ENCODE measurements at regions of chr11 and their contacts with region 1.

Region 1: GRCh38 chr11:113314389-113315301 is at the start of gene TTC12:
- DNase-seq: peak; percentile 85 to 91 (median 91)
- H3K4me3 ChIP-seq: peak within 1 kb of the TSS; percentile 73 to 88 (median 73)
- H3K4me3 Mint-ChIP-seq: peak within 1 kb of the TSS; percentile 89 to 90
- H3K27ac ChIP-seq: peak within 1 kb of the TSS; percentile 36 to 81
- H3K27ac Mint-ChIP-seq: peak within 1 kb of the TSS; percentile 80 to 96 (median 94)
- H3K4me1 ChIP-seq: peaks cover 11 to 13% of the 10 kb centered on the region in 2 donors
- H3K4me1 Mint-ChIP-seq: peaks cover 11% of the 10 kb centered on the region
- H3K27me3 ChIP-seq: no peaks in the 10 kb centered on the region
- H3K27me3 Mint-ChIP-seq: peaks cover 0 to 3% (median 0%) of the 10 kb centered on the region in 3 donors
- CTCF ChIP-seq: no peak
- polyA plus RNA-seq, gene TTC12: 1.7 to 3.0 (median 2.4) TPM

Region 2: GRCh38 chr11:111766093-111766833 is 1548.4 kb before region 1 on chr11 and contains the start of gene PPP2R1B:
- intact Hi-C with region 1: loop called in 1 of 2 experiments (anchors 10 kb)
- DNase-seq: peak; percentile 33 to 62 (median 53)
- H3K4me3 ChIP-seq: peak within 1 kb of the TSS; percentile 83 to 93 (median 85)
- H3K4me3 Mint-ChIP-seq: peak within 1 kb of the TSS; percentile 100
- H3K27ac ChIP-seq: peak within 1 kb of the TSS; percentile 11 to 65
- H3K27ac Mint-ChIP-seq: peak within 1 kb of the TSS; percentile 80 to 99 (median 94)
- H3K4me1 ChIP-seq: peaks cover 14 to 23% of the 10 kb centered on the region in 2 donors
- H3K4me1 Mint-ChIP-seq: peaks cover 21% of the 10 kb centered on the region
- H3K27me3 ChIP-seq: no peaks in the 10 kb centered on the region
- H3K27me3 Mint-ChIP-seq: peaks cover 0 to 7% (median 6%) of the 10 kb centered on the region in 3 donors
- CTCF ChIP-seq: no peak
- polyA plus RNA-seq, gene PPP2R1B: 5.4 to 16.9 (median 11.2) TPM

Region 3: GRCh38 chr11:111926505-111927391 is 1387.9 kb before region 1 on chr11:
- intact Hi-C with region 1: loop called in 1 of 2 experiments (anchors 10 kb)
- DNase-seq: peak; percentile 91 to 95 (median 94)
- H3K4me3 ChIP-seq: peak overlapping the region; percentile 61 to 77 (median 73)
- H3K4me3 Mint-ChIP-seq: peak overlapping the region; percentile 85 to 92
- H3K27ac ChIP-seq: peak overlapping the region; percentile 70 to 81
- H3K27ac Mint-ChIP-seq: peak overlapping the region; percentile 87 to 95 (median 93)
- H3K4me1 ChIP-seq: peaks cover 24 to 34% of the 10 kb centered on the region in 2 donors
- H3K4me1 Mint-ChIP-seq: peaks cover 28% of the 10 kb centered on the region
- H3K27me3 ChIP-seq: no peaks in the 10 kb centered on the region
- H3K27me3 Mint-ChIP-seq: peaks cover 0 to 2% (median 1%) of the 10 kb centered on the region in 3 donors
- CTCF ChIP-seq: no peak

Region 4: DNA sequence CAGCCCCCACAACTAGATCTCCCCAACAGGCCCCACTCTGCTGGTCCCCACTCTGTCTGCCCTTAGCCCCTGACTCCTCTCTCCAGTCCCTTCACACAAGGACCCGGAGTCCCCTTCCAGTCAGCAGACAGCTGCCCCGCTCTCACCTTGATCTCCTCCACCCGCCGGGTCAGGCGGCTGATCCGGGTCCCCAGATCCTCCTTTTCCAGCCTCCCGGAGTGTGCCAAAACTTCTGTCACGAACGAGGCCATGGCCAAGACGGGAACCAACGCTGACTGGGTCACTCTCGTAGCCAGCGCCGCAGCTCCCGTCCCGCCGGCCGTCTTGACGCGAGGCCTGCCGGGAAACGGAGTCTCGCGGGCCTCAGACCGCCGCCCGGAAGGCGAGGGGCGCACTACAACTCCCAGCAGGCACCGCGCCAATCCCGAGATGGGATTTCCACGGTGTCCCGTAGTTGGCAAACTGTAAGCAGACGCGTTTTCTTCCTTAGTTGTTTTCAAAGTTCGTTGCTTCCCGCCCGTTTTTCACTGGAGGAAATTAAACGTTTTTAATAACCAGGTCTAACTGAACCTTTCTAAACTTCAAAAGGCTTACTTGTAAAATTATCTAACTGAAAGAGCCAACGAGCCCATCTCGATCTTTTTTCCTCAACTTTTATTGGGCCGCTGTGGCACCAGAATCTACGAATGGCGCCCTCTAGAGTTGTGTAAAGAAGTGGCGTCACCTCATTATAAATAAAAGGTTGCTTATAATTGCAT is 458.9 kb after region 1 on chr11 and contains the start of gene ZW10:
- intact Hi-C with region 1: loop called (anchors 5 to 10 kb)
- DNase-seq: peak; percentile 92 to 95 (median 93)
- H3K4me3 ChIP-seq: peak within 1 kb of the TSS; percentile 60 to 99 (median 67)
- H3K4me3 Mint-ChIP-seq: peak within 1 kb of the TSS; percentile 98 to 99
- H3K27ac ChIP-seq: peak within 1 kb of the TSS; percentile 21 to 95
- H3K27ac Mint-ChIP-seq: peak within 1 kb of the TSS; percentile 92 to 97 (median 96)
- H3K4me1 ChIP-seq: peaks cover 11 to 14% of the 10 kb centered on the region in 2 donors
- H3K4me1 Mint-ChIP-seq: peaks cover 16% of the 10 kb centered on the region
- H3K27me3 ChIP-seq: no peaks in the 10 kb centered on the region
- H3K27me3 Mint-ChIP-seq: peaks cover 3 to 6% (median 5%) of the 10 kb centered on the region in 3 donors
- CTCF ChIP-seq: peak; percentile 97
- polyA plus RNA-seq, gene ZW10: 3.3 to 13.1 (median 10.2) TPM

Region 5: GRCh38 chr11:113875234-113876073 is 560.8 kb after region 1 on chr11 and contains the start of gene USP28:
- intact Hi-C with region 1: loop called in 1 of 2 experiments (anchors 10 kb)
- DNase-seq: peak; percentile 95 to 97 (median 96)
- H3K4me3 ChIP-seq: peak within 1 kb of the TSS; percentile 72 to 90 (median 74)
- H3K4me3 Mint-ChIP-seq: peak within 1 kb of the TSS; percentile 92 to 96
- H3K27ac ChIP-seq: peak within 1 kb of the TSS; percentile 92 to 96
- H3K27ac Mint-ChIP-seq: peak within 1 kb of the TSS; percentile 93 to 99 (median 97)
- H3K4me1 ChIP-seq: peaks cover 14 to 31% of the 10 kb centered on the region in 2 donors
- H3K4me1 Mint-ChIP-seq: peaks cover 31% of the 10 kb centered on the region
- H3K27me3 ChIP-seq: no peaks in the 10 kb centered on the region
- H3K27me3 Mint-ChIP-seq: peaks cover 0 to 4% (median 1%) of the 10 kb centered on the region in 3 donors
- CTCF ChIP-seq: no peak
- polyA plus RNA-seq, gene USP28: 13.4 to 21.9 (median 17.7) TPM

Region 6: DNA sequence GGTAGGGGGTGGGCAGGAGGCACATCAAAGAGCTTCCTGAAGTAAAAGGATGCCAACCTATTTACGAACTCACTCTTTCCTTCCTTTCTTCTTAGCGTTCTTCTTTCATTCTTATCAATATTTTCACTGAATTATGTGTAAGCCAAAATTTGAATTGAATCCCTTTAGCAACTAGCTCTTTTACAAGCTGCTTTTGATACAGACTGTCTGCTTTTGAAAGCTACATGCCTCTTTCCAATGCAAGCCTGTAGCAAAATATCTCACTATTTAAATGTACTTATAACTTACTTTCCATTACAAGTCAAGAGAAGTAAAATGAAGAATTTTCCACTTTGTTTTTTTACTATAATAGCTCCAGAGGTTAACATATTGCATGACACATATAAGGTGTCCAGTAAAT is 1550.3 kb after region 1 on chr11:
- intact Hi-C with region 1: no loop called
- DNase-seq: no peak
- H3K4me3 ChIP-seq: no peak overlapping the region
- H3K4me3 Mint-ChIP-seq: no peak overlapping the region
- H3K27ac ChIP-seq: no peak overlapping the region
- H3K27ac Mint-ChIP-seq: no peak overlapping the region
- H3K4me1 ChIP-seq: no peaks in the 10 kb centered on the region
- H3K4me1 Mint-ChIP-seq: no peaks in the 10 kb centered on the region
- H3K27me3 ChIP-seq: no peaks in the 10 kb centered on the region
- H3K27me3 Mint-ChIP-seq: peaks cover 0 to 3% (median 0%) of the 10 kb centered on the region in 3 donors
- CTCF ChIP-seq: no peak